ENCODE measurements at regions of chr5 and their contacts with region 1.

Region 1: GRCh38 chr5:158695595-158696330 is 404.0 kb downstream of the EBF1 start:
- DNase-seq: peak; percentile 66

Region 2: GRCh38 chr5:158741296-158741695 is 45.5 kb after region 1 on chr5:
- CTCF ChIA-PET with region 1: no interaction called
- POLR2A ChIA-PET with region 1: no interaction called
- DNase-seq: no peak

Region 3: DNA sequence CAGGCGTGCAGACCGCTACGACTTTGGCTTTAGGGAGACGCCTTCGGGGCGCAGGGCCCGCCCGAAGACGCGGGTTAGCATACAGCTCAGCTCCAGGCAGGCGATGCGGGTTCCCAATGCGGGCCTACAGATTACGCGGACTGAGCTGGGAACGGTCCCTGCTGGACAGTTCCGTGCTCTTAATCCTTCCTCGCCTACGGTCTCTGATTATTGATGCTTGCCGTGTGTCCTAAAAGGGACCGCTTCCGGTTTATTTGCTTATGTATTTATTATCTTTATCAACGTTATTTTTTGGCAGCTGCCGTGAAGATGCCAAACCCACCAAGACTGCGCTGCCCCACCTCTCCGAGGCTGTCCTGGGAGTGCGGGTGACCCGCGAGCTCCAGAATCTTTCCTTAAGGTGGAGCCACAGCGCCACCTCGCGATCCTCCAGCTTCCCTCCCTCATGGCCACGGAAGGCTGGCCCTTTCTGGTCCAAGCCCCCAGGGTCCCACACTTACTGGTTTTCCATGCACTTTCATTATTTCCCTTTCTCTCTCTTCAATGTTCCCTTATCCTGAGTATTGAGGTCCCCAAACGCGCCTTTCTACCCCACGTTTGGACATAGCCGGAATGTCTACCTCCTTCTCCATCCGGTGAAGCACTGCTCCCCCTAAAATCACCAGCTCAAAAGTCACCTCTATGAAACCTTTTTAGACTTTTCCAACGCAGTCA is 411.0 kb after region 1 on chr5:
- CTCF ChIA-PET with region 1: interaction called, 48 read pairs
- POLR2A ChIA-PET with region 1: no interaction called
- DNase-seq: peak; percentile 80

Region 4: DNA sequence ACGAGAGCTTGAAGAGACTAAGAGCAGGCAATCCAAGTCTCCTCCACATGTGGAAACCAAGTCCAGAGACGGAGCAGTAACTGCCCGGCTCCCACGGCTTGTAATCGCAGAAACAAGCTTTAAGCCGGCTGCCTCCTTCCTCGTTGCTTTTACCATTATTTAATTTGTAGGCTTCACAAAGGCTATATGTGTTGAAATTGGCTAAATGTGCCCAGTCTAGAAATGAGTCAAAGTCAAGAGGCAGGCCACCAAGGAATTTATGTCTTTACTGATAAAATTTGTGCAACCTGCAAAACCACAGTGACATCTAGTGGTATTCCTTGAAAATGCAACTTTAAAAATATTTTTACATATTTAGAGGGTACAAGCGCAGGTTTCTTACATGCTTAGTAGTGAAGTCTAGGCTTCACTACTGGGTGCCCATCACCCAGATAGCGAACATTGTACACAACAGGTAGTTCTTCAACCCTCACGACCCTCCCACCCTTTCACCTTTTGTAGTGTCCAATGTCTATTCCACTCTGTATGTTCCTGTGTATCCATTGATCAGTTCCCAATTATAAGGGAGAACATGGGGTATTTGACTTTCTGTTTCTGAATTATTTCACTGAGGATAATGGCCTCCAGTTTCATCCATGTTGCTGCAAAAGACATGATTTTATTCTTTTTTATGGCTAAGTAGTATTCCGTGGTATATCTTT is 437.4 kb after region 1 on chr5:
- CTCF ChIA-PET with region 1: interaction called, 14 read pairs
- POLR2A ChIA-PET with region 1: no interaction called
- DNase-seq: peak; percentile 59

Region 5: GRCh38 chr5:160001457-160001856 is 1305.7 kb after region 1 on chr5:
- CTCF ChIA-PET with region 1: interaction called, 14 read pairs
- POLR2A ChIA-PET with region 1: no interaction called
- DNase-seq: no peak